Activated CD8-positive, alpha-beta T cell treated with anti-CD3 and anti-CD28 coated beads for 36 hours (primary cell): ENCODE measurements at regions of chr1 and their contacts with region 1.

Region 1: DNA sequence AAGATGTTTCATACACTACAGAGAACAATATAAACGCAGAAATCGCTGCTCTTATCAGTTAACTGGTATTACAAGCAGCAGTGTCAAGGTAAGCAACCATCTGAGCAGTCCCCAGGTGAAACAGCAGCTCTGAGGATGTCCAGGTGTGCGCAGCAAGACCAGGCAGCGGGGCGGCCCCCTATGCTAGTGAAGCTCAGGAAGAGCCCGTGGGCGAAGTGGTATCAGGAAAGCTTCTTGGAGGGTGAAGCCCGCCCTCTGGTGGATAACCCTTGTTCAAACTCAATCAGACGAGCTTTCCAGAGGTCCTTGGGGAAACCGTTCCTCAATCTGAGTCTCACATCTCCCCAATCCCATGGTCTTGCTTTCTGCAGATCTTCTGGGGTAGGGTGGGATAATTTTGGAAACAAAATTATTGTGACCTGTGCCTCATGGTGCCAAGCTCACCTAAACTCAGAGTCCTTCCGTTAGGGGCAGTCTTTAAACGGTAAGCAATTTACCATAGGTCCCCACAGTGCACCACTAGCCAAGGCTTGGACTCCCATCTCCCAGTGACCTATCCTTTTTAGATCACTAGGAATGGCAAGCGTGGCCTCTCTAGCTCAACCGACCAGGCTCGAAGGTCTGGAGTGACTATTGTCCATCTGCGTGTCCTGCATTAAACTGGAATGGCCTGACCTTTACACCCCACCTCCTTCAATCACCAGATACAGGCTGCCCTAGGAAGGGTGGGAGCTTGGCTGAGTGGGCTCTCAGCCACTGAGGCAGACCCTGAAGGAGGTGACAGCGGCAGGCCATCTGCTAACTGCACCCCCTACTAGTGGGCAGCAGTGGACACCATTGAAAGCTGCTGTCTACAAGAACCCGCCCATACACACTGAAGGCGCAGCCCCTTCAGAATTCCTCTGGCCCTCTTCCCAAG is 13.6 kb upstream of the FAM110D start:
- DNase-seq: peak; percentile 91
- ATAC-seq: peak; percentile 92
- H3K4me3 Mint-ChIP-seq: no peak overlapping the region
- H3K27ac Mint-ChIP-seq: no peak overlapping the region
- H3K4me1 Mint-ChIP-seq: peaks cover 5% of the 10 kb centered on the region
- H3K27me3 Mint-ChIP-seq: no peaks in the 10 kb centered on the region
- CTCF ChIP-seq: peak; percentile 95

Region 2: DNA sequence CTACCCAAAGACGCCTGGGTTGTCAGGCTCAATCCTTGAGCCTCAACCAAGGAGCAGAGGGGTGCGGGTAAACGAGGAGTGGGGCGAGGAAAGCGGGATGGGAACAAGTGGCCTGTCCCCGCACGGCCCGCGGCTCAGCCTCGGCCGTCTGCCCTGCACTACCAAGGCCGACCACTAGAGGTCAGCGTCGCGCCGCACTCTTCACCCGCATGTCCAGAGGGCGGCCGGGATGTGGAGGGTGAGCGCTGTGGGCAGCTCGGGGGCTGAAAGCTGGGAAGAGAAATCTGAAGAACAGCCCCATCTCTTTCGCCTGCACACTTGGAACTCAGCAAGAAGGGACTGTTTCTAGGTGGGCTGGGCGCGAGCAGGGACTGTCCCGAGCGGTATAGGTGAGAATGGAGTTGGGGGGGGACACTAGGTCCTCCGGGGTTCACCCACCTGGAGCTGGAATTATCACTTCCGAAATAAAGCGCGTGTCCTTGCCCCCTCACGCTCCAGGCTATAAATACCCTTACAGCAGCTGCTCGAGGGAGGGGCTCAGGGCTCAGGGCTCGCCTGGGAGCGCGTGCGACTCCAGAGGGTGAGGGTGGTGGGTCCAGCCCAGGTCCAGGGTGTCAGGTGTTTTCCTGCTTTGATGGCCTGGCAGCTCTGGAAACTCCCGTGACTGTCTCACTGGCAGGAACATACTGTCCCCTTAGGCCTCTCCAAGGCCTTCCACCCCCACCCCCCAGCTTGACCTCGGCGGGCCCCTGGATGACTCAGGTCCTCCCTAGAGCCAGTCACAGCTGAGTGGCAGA is 109.1 kb before region 1 on chr1:
- CTCF ChIA-PET with region 1: interaction called, 10 read pairs
- POLR2A ChIA-PET with region 1: no interaction called
- intact Hi-C with region 1: loop called (anchors 10 kb)
- DNase-seq: peak; percentile 81
- ATAC-seq: peak; percentile 77
- H3K4me3 Mint-ChIP-seq: peak overlapping the region; percentile 91
- H3K27ac Mint-ChIP-seq: peak overlapping the region; percentile 72
- H3K4me1 Mint-ChIP-seq: peaks cover 14% of the 10 kb centered on the region
- H3K27me3 Mint-ChIP-seq: no peaks in the 10 kb centered on the region
- CTCF ChIP-seq: peak; percentile 100

Region 3: GRCh38 chr1:26102526-26102925 is 42.8 kb before region 1 on chr1:
- CTCF ChIA-PET with region 1: interaction called, 157 read pairs
- POLR2A ChIA-PET with region 1: interaction called, 3 read pairs
- intact Hi-C with region 1: loop called (anchors 1 kb)
- DNase-seq: no peak
- ATAC-seq: no peak
- H3K4me3 Mint-ChIP-seq: no peak overlapping the region
- H3K27ac Mint-ChIP-seq: no peak overlapping the region
- H3K4me1 Mint-ChIP-seq: peaks cover 3% of the 10 kb centered on the region
- H3K27me3 Mint-ChIP-seq: peaks cover 2% of the 10 kb centered on the region
- CTCF ChIP-seq: no peak

Region 4: DNA sequence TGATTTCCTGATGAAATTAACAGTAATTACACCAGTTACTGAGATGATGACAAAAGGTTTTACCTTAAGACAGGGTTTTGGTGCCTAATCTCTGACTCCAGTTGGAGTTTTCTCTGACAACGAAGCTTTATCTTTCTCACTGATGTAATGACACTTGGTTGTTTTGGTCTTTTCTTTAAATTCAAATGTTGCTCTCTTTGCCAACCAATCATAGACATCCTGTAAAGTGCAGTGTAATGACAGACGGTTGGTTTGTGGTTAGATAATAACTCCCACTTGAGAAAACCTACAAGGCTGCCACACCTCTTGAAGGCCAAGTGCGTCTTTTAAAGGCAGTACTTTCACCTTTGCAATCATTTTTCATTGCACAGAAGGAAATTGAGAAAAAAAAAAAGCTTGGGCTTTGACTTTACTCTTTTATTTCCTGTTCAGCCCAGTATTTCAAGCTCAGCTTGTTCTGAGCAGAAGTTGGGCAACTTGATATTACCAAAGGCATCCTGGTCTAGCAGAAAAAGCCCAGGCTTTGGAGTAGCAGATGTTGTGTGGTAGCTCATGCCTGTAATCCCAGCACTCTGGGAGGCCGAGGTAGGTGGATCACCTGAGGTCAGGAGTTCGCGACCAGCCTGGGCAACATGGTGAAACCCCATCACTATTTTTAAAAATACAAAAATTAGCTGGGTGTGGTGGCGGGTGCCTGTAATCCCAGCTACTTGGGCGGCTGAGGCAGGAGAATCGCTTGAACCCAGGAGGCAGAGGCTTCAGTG is 18.8 kb before region 1 on chr1:
- CTCF ChIA-PET with region 1: interaction called, 164 read pairs
- POLR2A ChIA-PET with region 1: interaction called, 6 read pairs
- intact Hi-C with region 1: no loop called
- DNase-seq: peak; percentile 67
- ATAC-seq: peak; percentile 93
- H3K4me3 Mint-ChIP-seq: peak overlapping the region; percentile 71
- H3K27ac Mint-ChIP-seq: peak overlapping the region; percentile 91
- H3K4me1 Mint-ChIP-seq: peaks cover 41% of the 10 kb centered on the region
- H3K27me3 Mint-ChIP-seq: peaks cover 2% of the 10 kb centered on the region
- CTCF ChIP-seq: no peak

Region 5: GRCh38 chr1:26161415-26162219 is 16.3 kb after region 1 on chr1:
- CTCF ChIA-PET with region 1: interaction called, 25 read pairs
- POLR2A ChIA-PET with region 1: interaction called, 3 read pairs
- intact Hi-C with region 1: no loop called
- DNase-seq: peak; percentile 56
- ATAC-seq: peak; percentile 60
- H3K4me3 Mint-ChIP-seq: peak overlapping the region; percentile 61
- H3K27ac Mint-ChIP-seq: no peak overlapping the region
- H3K4me1 Mint-ChIP-seq: peaks cover 10% of the 10 kb centered on the region
- H3K27me3 Mint-ChIP-seq: peaks cover 27% of the 10 kb centered on the region
- CTCF ChIP-seq: no peak